B cell (primary cell): ENCODE measurements at regions of chr1 and their contacts with region 1.

Region 1: DNA sequence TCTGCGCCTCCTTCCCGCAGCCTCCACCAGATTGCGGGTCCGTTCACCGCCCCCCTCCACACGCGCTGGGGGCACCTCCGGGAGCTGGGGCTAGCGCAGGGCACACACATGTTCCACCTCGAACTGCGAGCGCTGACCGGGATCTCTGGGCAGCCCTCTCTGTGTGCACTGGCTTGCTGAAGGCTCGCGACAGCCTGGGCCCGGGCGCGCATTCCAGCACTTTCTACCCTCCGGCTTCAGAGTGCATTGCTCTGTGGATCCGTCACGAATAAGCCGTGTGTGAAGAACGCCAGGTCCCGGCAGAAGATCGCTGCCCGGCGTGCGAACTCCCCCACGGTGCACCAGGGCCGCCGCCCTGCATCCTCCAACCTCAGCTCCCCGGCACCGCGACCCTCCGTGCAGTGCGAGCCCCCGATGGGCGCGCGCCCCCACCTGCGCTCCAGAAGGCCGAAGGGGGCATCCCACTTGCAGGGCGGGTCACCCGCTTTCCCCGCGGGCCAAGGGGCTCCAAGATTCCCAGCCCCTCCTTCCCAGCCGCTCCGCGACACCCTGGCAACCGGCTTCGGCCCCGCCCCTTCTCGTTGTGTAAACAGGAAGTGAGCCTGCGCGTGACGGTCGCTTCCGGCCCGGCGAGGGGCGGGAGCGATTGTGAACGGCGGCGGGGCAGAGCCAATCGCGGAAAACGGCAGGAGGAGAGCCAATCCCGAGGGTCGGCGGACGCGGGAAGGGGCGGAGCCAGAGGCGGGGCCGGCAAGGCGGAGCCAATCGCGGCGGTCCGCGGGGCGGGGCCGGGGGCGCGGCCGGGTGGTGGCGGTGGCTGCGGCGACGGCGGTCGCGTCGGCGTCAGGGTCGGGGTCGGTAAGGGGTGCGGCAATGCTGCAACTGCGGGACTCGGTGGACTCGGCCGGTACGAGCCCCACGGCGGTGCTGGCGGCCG is at the start of gene TPRG1L:
- DNase-seq: peak; percentile 99
- ATAC-seq: peak; percentile 98
- H3K4me3 ChIP-seq: peak within 1 kb of the TSS; percentile 58 to 97 (median 88)
- H3K4me3 Mint-ChIP-seq: peak within 1 kb of the TSS; percentile 93
- H3K27ac ChIP-seq: peak within 1 kb of the TSS; percentile 63 to 71
- H3K27ac Mint-ChIP-seq: peak within 1 kb of the TSS; percentile 92
- H3K4me1 ChIP-seq: peaks cover 18 to 29% of the 10 kb centered on the region in 2 donors
- H3K4me1 Mint-ChIP-seq: peaks cover 48% of the 10 kb centered on the region
- H3K27me3 ChIP-seq: no peaks in the 10 kb centered on the region
- H3K27me3 Mint-ChIP-seq: no peaks in the 10 kb centered on the region
- CTCF ChIP-seq: no peak
- total RNA-seq, gene TPRG1L: 47.5 and 48.6 TPM in 2 replicates

Region 2: DNA sequence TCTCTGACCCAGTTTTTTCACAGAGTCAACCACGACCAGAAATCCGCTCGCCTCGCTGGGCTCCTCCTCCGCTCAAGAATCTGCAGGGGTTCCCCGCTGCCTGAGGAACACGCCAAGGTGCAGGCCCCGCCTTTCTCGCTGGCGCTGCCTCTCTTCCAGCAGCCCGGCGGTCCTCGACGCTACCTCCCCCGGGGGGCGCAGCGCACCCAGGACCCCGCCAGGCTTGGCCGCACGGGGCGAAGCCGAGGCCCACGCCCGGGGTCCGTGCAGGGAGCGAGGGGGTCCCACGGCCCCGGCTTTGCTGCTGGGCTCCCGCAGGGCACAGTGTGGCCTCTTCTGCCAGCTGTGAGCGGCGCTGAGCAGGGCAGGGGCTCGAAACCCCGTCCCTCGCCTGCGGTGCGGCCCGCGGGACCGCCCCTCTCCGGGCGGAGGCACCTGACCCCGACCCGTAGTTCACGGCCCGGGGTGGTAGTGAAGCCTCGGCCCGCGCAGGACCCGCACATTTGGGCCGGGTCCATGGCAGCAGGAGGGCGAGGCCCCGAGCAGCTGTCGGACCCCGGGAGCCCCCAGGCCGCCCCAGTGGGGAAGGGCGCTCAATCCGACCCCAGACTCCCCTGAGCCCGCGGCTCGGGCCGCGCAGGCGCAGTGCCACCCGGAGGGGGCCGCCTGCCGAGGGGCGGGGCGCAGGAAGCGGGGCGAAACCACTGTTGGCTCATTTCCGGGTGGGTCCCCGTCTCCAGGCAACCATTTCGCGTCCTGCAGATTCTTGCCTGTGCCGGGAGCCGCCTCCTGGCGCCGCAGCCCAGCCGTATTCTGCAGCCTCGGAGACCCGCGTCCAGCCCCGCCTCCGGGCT is 981.7 kb before region 1 on chr1:
- CTCF ChIA-PET with region 1: no interaction called
- POLR2A ChIA-PET with region 1: no interaction called
- intact Hi-C with region 1: loop called (anchors 10 kb)
- DNase-seq: peak; percentile 95
- ATAC-seq: peak; percentile 77
- H3K4me3 ChIP-seq: peak overlapping the region; percentile 38 to 91 (median 83)
- H3K4me3 Mint-ChIP-seq: peak overlapping the region; percentile 91
- H3K27ac ChIP-seq: peak overlapping the region; percentile 81 to 97
- H3K27ac Mint-ChIP-seq: peak overlapping the region; percentile 86
- H3K4me1 ChIP-seq: peaks cover 13 to 17% of the 10 kb centered on the region in 2 donors
- H3K4me1 Mint-ChIP-seq: peaks cover 12% of the 10 kb centered on the region
- H3K27me3 ChIP-seq: no peaks in the 10 kb centered on the region
- H3K27me3 Mint-ChIP-seq: no peaks in the 10 kb centered on the region
- CTCF ChIP-seq: no peak

Region 3: GRCh38 chr1:3649342-3650247 is 25.1 kb after region 1 on chr1 and contains the start of gene WRAP73:
- CTCF ChIA-PET with region 1: interaction called, 14 read pairs
- POLR2A ChIA-PET with region 1: interaction called, 3 read pairs
- intact Hi-C with region 1: loop called (anchors 1 kb)
- DNase-seq: peak; percentile 94
- ATAC-seq: peak; percentile 93
- H3K4me3 ChIP-seq: peak within 1 kb of the TSS; percentile 25 to 90 (median 79)
- H3K4me3 Mint-ChIP-seq: peak within 1 kb of the TSS; percentile 91
- H3K27ac ChIP-seq: peak within 1 kb of the TSS in 1 of 2 donors; percentile 69
- H3K27ac Mint-ChIP-seq: peak within 1 kb of the TSS; percentile 73
- H3K4me1 ChIP-seq: peaks cover 37 to 43% of the 10 kb centered on the region in 2 donors
- H3K4me1 Mint-ChIP-seq: peaks cover 30% of the 10 kb centered on the region
- H3K27me3 ChIP-seq: peaks cover 0 to 38% (median 23%) of the 10 kb centered on the region in 4 experiments
- H3K27me3 Mint-ChIP-seq: peaks cover 21% of the 10 kb centered on the region
- CTCF ChIP-seq: peak; percentile 42
- total RNA-seq, gene WRAP73: 37.1 and 37.5 TPM in 2 replicates

Region 4: GRCh38 chr1:3772027-3772714 is 147.7 kb after region 1 on chr1:
- CTCF ChIA-PET with region 1: no interaction called
- POLR2A ChIA-PET with region 1: no interaction called
- intact Hi-C with region 1: loop called (anchors 1 kb)
- DNase-seq: peak; percentile 91
- ATAC-seq: peak; percentile 89
- H3K4me3 ChIP-seq: peak overlapping the region in 4 of 5 experiments; percentile 53 to 75 (median 68)
- H3K4me3 Mint-ChIP-seq: peak overlapping the region; percentile 84
- H3K27ac ChIP-seq: peak overlapping the region; percentile 33 to 55
- H3K27ac Mint-ChIP-seq: no peak overlapping the region
- H3K4me1 ChIP-seq: peaks cover 19 to 33% of the 10 kb centered on the region in 2 donors
- H3K4me1 Mint-ChIP-seq: peaks cover 23% of the 10 kb centered on the region
- H3K27me3 ChIP-seq: no peaks in the 10 kb centered on the region
- H3K27me3 Mint-ChIP-seq: peaks cover 6% of the 10 kb centered on the region
- CTCF ChIP-seq: no peak

Region 5: GRCh38 chr1:3856908-3857790 is 232.7 kb after region 1 on chr1 and contains the starts of genes CEP104 and DFFB:
- CTCF ChIA-PET with region 1: no interaction called
- POLR2A ChIA-PET with region 1: no interaction called
- intact Hi-C with region 1: loop called (anchors 10 kb)
- DNase-seq: peak; percentile 99
- ATAC-seq: peak; percentile 97
- H3K4me3 ChIP-seq: peak within 1 kb of the TSS; percentile 59 to 92 (median 85)
- H3K4me3 Mint-ChIP-seq: peak within 1 kb of the TSS; percentile 98
- H3K27ac ChIP-seq: peak within 1 kb of the TSS; percentile 59 to 68
- H3K27ac Mint-ChIP-seq: peak within 1 kb of the TSS; percentile 93
- H3K4me1 ChIP-seq: peaks cover 20 to 24% of the 10 kb centered on the region in 2 donors
- H3K4me1 Mint-ChIP-seq: peaks cover 31% of the 10 kb centered on the region
- H3K27me3 ChIP-seq: no peaks in the 10 kb centered on the region
- H3K27me3 Mint-ChIP-seq: no peaks in the 10 kb centered on the region
- CTCF ChIP-seq: peak; percentile 46
- total RNA-seq, gene CEP104: 71.8 and 76.2 TPM in 2 replicates
- total RNA-seq, gene DFFB: 17.4 and 20.7 TPM in 2 replicates